CD4-positive, alpha-beta T cell (primary cell): ENCODE measurements at regions of chr16 and their contacts with region 1.

Region 1: DNA sequence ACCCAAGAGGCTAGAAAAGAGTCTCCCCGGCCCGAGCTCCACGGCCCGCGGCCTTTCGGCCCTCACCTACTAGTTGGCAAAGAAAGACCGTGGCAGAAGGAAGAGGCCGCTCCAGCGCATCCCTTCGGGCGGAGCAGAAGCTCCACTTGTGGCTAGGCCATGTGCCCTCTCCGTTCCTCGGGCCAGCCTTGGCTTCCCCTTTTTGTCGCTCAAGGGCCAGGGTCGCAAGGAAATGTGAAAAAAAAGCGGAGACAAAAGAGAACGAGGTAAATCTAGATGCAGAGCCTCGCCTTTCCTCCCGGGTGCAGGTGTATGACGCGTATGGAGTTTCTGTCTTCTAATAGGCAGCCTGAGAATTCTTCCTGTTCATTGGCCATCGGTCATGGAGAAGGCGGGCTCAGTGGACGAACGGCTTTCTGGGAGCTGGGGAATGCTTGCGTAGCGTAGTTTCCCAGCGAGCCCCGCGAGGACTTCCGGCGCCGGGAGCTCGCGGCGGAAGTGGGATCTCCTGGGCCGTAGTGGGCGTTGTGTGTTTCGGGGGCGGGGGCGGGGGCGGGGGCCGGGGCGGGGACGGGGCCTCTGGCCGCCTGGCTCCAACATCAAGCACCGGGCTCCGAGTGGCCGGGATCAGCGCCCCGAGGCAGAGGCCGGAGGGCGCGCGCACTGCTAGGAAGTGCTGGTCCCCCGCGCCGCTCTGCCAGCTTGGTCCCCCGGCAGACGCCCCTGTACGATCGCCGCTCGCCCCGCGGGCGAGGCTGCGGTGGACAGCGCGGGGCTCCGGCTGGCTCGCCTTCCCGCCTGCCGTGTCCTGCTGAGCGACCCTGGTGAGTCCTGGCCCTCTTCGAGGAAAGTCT is at the start of gene ZNF213:
- DNase-seq: peak; percentile 79 to 99 (median 89)
- ATAC-seq: peak; percentile 97
- H3K4me3 ChIP-seq: peak within 1 kb of the TSS; percentile 84
- H3K4me3 Mint-ChIP-seq: peak within 1 kb of the TSS; percentile 99
- H3K27ac ChIP-seq: peak within 1 kb of the TSS; percentile 91 to 92
- H3K27ac Mint-ChIP-seq: peak within 1 kb of the TSS; percentile 94
- H3K4me1 ChIP-seq: peaks cover 29% of the 10 kb centered on the region
- H3K4me1 Mint-ChIP-seq: peaks cover 38% of the 10 kb centered on the region
- H3K27me3 ChIP-seq: no peaks in the 10 kb centered on the region
- H3K27me3 Mint-ChIP-seq: no peaks in the 10 kb centered on the region
- CTCF ChIP-seq: no peak
- total RNA-seq, gene ZNF213: 1.6 to 2.2 TPM

Region 2: DNA sequence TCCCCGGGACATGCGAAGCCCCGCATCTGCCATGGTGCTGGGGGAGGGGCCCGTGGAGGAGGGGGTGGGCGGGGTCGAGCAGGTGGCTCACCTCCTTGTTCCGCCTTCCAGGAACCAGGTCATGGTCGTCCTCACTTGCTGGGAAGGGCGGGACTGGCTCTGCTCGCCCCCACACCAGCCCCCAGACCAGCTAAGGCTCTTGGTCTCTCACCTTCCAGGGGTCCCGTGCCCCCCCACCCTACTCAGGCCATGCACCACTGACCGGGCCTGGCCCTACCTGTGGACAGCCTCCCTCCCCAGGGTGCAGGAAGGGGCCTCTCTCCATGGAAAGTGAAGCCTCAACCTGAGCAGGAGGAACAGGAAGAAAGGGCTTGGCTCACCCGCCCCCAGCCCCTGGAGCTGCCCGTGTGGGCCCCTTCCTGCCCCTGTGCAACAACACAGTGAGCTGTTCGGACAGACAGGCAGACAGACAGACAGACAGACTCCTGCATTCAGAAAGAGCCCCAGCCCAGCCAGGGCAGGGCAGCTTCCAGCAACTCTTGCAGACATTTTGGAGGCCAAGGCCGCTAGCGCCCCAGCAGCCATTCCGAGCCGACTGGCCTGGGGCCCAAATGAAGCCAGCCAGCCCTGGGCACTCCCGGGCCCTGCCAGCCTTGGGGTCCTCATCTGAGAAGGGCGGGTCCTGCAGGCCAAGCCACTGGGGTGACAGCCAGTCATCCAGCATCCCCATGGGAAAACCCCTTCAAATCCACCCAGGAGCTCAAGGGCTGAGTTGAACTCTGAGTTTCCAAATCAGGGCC is 178.8 kb before region 1 on chr16:
- CTCF ChIA-PET with region 1: no interaction called
- POLR2A ChIA-PET with region 1: no interaction called
- intact Hi-C with region 1: no loop called
- DNase-seq: peak in 1 of 14 experiments; percentile 35
- ATAC-seq: no peak
- H3K4me3 ChIP-seq: no peak overlapping the region
- H3K4me3 Mint-ChIP-seq: no peak overlapping the region
- H3K27ac ChIP-seq: no peak overlapping the region
- H3K27ac Mint-ChIP-seq: no peak overlapping the region
- H3K4me1 ChIP-seq: peaks cover 6% of the 10 kb centered on the region
- H3K4me1 Mint-ChIP-seq: no peaks in the 10 kb centered on the region
- H3K27me3 ChIP-seq: peaks cover 20% of the 10 kb centered on the region in 2 experiments
- H3K27me3 Mint-ChIP-seq: peaks cover 10% of the 10 kb centered on the region
- CTCF ChIP-seq: no peak

Region 3: DNA sequence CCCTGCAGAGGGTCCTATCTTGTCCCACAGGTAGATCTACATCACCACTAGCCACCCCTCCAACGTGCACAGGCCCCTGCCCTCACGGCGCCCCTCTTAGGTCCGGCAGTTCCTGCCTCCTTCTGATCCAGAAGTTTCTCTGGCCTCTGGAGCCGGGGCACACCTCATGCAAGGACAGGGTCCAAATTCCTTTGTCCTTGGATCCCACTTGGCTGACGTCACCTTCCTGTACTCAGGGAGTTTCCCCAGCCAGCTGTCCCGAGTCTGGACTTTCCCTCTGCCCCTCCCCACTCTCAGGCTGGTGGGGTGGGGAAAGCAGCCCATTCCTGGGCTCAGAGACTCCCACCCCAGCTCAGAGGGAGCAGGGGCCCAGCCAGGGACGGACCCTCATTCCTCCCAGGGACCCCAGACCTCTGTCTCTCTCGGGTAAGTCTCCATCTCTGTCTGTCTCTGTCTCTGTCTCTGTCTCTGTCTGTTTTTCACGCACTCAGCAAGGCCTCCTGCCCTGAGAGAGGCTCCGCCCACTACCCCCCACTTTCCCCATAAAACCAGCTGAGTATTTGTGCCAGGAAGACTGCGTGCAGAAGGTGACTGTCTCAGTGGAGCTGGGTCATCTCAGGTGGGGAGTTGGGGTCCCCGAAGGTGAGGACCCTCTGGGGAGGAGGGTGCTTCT is 69.6 kb before region 1 on chr16 and contains the start of gene IL32:
- CTCF ChIA-PET with region 1: interaction called, 62 read pairs
- POLR2A ChIA-PET with region 1: interaction called, 70 read pairs
- intact Hi-C with region 1: no loop called
- DNase-seq: peak; percentile 46 to 88 (median 68)
- ATAC-seq: peak; percentile 65
- H3K4me3 ChIP-seq: peak within 1 kb of the TSS; percentile 99
- H3K4me3 Mint-ChIP-seq: peak within 1 kb of the TSS; percentile 99
- H3K27ac ChIP-seq: peak within 1 kb of the TSS; percentile 85 to 98
- H3K27ac Mint-ChIP-seq: peak within 1 kb of the TSS; percentile 97
- H3K4me1 ChIP-seq: peaks cover 78% of the 10 kb centered on the region
- H3K4me1 Mint-ChIP-seq: peaks cover 67% of the 10 kb centered on the region
- H3K27me3 ChIP-seq: no peaks in the 10 kb centered on the region
- H3K27me3 Mint-ChIP-seq: no peaks in the 10 kb centered on the region
- CTCF ChIP-seq: no peak
- total RNA-seq, gene IL32: 378 to 383 TPM

Region 4: GRCh38 chr16:3099732-3100499 is 34.9 kb before region 1 on chr16:
- CTCF ChIA-PET with region 1: interaction called, 30 read pairs
- POLR2A ChIA-PET with region 1: interaction called, 19 read pairs
- intact Hi-C with region 1: loop called (anchors 1 to 2 kb)
- DNase-seq: peak; percentile 78 to 97 (median 88)
- ATAC-seq: peak; percentile 82
- H3K4me3 ChIP-seq: peak overlapping the region; percentile 48
- H3K4me3 Mint-ChIP-seq: peak overlapping the region; percentile 82
- H3K27ac ChIP-seq: peak overlapping the region in 1 of 2 donors; percentile 18
- H3K27ac Mint-ChIP-seq: peak overlapping the region; percentile 68
- H3K4me1 ChIP-seq: peaks cover 49% of the 10 kb centered on the region
- H3K4me1 Mint-ChIP-seq: peaks cover 71% of the 10 kb centered on the region
- H3K27me3 ChIP-seq: no peaks in the 10 kb centered on the region
- H3K27me3 Mint-ChIP-seq: no peaks in the 10 kb centered on the region
- CTCF ChIP-seq: no peak

Region 5: GRCh38 chr16:3150346-3151218 is 15.8 kb after region 1 on chr16:
- CTCF ChIA-PET with region 1: interaction called, 20 read pairs
- POLR2A ChIA-PET with region 1: interaction called, 77 read pairs
- intact Hi-C with region 1: loop called (anchors 1 to 2 kb)
- DNase-seq: peak; percentile 94 to 99 (median 98)
- ATAC-seq: peak; percentile 81
- H3K4me3 ChIP-seq: peak overlapping the region; percentile 70
- H3K4me3 Mint-ChIP-seq: peak overlapping the region; percentile 93
- H3K27ac ChIP-seq: peak overlapping the region in 1 of 2 donors; percentile 64
- H3K27ac Mint-ChIP-seq: peak overlapping the region; percentile 98
- H3K4me1 ChIP-seq: peaks cover 37% of the 10 kb centered on the region
- H3K4me1 Mint-ChIP-seq: peaks cover 31% of the 10 kb centered on the region
- H3K27me3 ChIP-seq: no peaks in the 10 kb centered on the region
- H3K27me3 Mint-ChIP-seq: peaks cover 22% of the 10 kb centered on the region
- CTCF ChIP-seq: no peak

Region 6: GRCh38 chr16:3400779-3401688 is 266.2 kb after region 1 on chr16 and contains the starts of genes ZNF174 and ZSCAN32:
- CTCF ChIA-PET with region 1: interaction called, 4 read pairs
- POLR2A ChIA-PET with region 1: interaction called, 14 read pairs
- intact Hi-C with region 1: no loop called
- DNase-seq: peak; percentile 96 to 99 (median 98)
- ATAC-seq: peak; percentile 97
- H3K4me3 ChIP-seq: peak within 1 kb of the TSS; percentile 83
- H3K4me3 Mint-ChIP-seq: peak within 1 kb of the TSS; percentile 95
- H3K27ac ChIP-seq: peak within 1 kb of the TSS; percentile 71 to 73
- H3K27ac Mint-ChIP-seq: peak within 1 kb of the TSS; percentile 88
- H3K4me1 ChIP-seq: peaks cover 49% of the 10 kb centered on the region
- H3K4me1 Mint-ChIP-seq: peaks cover 67% of the 10 kb centered on the region
- H3K27me3 ChIP-seq: no peaks in the 10 kb centered on the region
- H3K27me3 Mint-ChIP-seq: no peaks in the 10 kb centered on the region
- CTCF ChIP-seq: no peak
- total RNA-seq, gene ZNF174: 5.6 to 5.7 TPM
- total RNA-seq, gene ZSCAN32: 4.8 to 5.4 TPM